ENCODE measurements at regions of chr15 and their contacts with region 1.

Region 1: GRCh38 chr15:67456677-67457529 is 64.0 kb upstream of the C15orf61 start:
- DNase-seq: peak; percentile 92
- ATAC-seq: peak; percentile 86
- H3K4me3 Mint-ChIP-seq: no peak overlapping the region
- H3K27ac Mint-ChIP-seq: no peak overlapping the region
- H3K4me1 Mint-ChIP-seq: no peaks in the 10 kb centered on the region
- H3K27me3 Mint-ChIP-seq: peaks cover 2% of the 10 kb centered on the region

Region 2: DNA sequence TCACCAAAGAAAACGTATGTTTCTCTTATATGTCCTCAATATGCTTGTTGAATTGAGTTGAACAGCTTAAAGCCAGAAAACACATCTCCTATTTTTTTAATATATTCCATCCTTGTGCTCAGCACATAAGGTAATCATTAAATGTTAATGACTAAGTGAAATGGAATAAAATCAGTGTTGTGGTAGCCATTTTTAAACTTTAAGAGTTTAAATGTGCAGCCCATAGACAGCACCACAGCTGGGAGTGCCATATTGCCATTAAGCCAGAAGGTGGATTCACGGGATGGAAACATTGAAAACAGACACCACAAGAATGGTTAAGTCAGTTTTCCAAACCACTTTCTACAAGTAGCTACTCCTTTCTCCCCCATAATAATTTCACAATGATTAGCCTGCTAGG is 12.8 kb before region 1 on chr15:
- CTCF ChIA-PET with region 1: interaction called, 12 read pairs
- POLR2A ChIA-PET with region 1: no interaction called
- intact Hi-C with region 1: no loop called
- DNase-seq: no peak
- ATAC-seq: no peak
- H3K4me3 Mint-ChIP-seq: no peak overlapping the region
- H3K27ac Mint-ChIP-seq: no peak overlapping the region
- H3K4me1 Mint-ChIP-seq: no peaks in the 10 kb centered on the region
- H3K27me3 Mint-ChIP-seq: no peaks in the 10 kb centered on the region

Region 3: GRCh38 chr15:67468416-67468815 is 11.5 kb after region 1 on chr15:
- CTCF ChIA-PET with region 1: interaction called, 12 read pairs
- POLR2A ChIA-PET with region 1: no interaction called
- intact Hi-C with region 1: no loop called
- DNase-seq: no peak
- ATAC-seq: no peak
- H3K4me3 Mint-ChIP-seq: no peak overlapping the region
- H3K27ac Mint-ChIP-seq: no peak overlapping the region
- H3K4me1 Mint-ChIP-seq: no peaks in the 10 kb centered on the region
- H3K27me3 Mint-ChIP-seq: no peaks in the 10 kb centered on the region

Region 4: DNA sequence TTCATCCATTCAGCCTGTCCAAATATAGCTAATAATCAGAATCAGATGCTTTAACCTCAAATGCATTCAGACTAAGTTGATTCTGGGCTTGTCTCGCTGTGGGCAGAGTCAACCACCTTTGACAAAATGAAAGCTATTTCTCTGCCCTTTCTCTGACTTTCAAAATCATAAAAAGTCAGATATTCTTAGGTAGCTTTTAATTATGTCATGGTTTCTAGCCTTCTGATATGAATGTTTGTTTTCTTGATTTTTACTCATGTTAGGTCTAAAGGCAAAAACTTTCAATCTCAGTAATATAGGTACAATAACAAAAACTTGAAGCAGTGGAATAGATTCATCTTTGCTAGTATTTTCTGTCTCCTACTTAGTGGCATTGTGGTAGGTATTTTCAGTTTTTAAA is 38.7 kb after region 1 on chr15:
- CTCF ChIA-PET with region 1: interaction called, 10 read pairs
- POLR2A ChIA-PET with region 1: no interaction called
- intact Hi-C with region 1: no loop called
- DNase-seq: no peak
- ATAC-seq: peak; percentile 65
- H3K4me3 Mint-ChIP-seq: no peak overlapping the region
- H3K27ac Mint-ChIP-seq: peak overlapping the region; percentile 28
- H3K4me1 Mint-ChIP-seq: peaks cover 9% of the 10 kb centered on the region
- H3K27me3 Mint-ChIP-seq: no peaks in the 10 kb centered on the region

Region 5: GRCh38 chr15:67833710-67834511 is 377.0 kb after region 1 on chr15:
- CTCF ChIA-PET with region 1: interaction called, 37 read pairs
- POLR2A ChIA-PET with region 1: no interaction called
- intact Hi-C with region 1: loop called (anchors 1 kb)
- DNase-seq: peak; percentile 70
- ATAC-seq: peak; percentile 57
- H3K4me3 Mint-ChIP-seq: peak overlapping the region; percentile 55
- H3K27ac Mint-ChIP-seq: no peak overlapping the region
- H3K4me1 Mint-ChIP-seq: peaks cover 36% of the 10 kb centered on the region
- H3K27me3 Mint-ChIP-seq: peaks cover 56% of the 10 kb centered on the region

Region 6: DNA sequence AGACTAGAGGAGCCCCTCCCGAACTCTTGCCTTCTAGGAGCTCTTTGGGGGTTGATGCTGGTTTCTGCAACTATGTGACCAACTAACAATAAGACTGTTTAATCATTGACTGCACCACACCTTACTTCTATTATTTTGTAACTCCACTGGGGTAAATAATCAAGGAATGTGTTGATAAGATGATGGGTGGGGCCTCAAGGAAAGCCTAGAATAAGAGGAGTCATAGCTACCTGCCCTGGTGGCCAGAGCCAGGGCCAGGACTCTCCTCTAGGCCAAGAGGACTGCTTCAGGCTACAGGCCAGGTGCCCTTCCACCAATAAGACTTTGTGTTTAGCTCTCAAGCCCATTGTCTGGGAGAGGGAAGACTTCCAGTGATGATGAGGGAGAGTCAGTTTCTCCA is 556.0 kb after region 1 on chr15:
- CTCF ChIA-PET with region 1: no interaction called
- POLR2A ChIA-PET with region 1: no interaction called
- intact Hi-C with region 1: no loop called
- DNase-seq: no peak
- ATAC-seq: no peak
- H3K4me3 Mint-ChIP-seq: no peak overlapping the region
- H3K27ac Mint-ChIP-seq: no peak overlapping the region
- H3K4me1 Mint-ChIP-seq: no peaks in the 10 kb centered on the region
- H3K27me3 Mint-ChIP-seq: peaks cover 9% of the 10 kb centered on the region

Measured in activated CD4-positive, alpha-beta T cell treated with anti-CD3 and anti-CD28 coated beads for 36 hours (primary cell).